Activated naive CD4-positive, alpha-beta T cell treated with anti-CD3 and anti-CD28 coated beads for 36 hours (primary cell): ENCODE measurements at regions of chr14 and their contacts with region 1.

Region 1: GRCh38 chr14:105490572-105491366 is at the start of gene TEDC1:
- DNase-seq: peak; percentile 100
- H3K4me3 Mint-ChIP-seq: peak within 1 kb of the TSS; percentile 83
- H3K27ac Mint-ChIP-seq: peak within 1 kb of the TSS; percentile 85
- H3K4me1 Mint-ChIP-seq: peaks cover 31% of the 10 kb centered on the region
- H3K27me3 Mint-ChIP-seq: no peaks in the 10 kb centered on the region
- total RNA-seq, gene TEDC1: 27.8 to 28.6 TPM

Region 2: DNA sequence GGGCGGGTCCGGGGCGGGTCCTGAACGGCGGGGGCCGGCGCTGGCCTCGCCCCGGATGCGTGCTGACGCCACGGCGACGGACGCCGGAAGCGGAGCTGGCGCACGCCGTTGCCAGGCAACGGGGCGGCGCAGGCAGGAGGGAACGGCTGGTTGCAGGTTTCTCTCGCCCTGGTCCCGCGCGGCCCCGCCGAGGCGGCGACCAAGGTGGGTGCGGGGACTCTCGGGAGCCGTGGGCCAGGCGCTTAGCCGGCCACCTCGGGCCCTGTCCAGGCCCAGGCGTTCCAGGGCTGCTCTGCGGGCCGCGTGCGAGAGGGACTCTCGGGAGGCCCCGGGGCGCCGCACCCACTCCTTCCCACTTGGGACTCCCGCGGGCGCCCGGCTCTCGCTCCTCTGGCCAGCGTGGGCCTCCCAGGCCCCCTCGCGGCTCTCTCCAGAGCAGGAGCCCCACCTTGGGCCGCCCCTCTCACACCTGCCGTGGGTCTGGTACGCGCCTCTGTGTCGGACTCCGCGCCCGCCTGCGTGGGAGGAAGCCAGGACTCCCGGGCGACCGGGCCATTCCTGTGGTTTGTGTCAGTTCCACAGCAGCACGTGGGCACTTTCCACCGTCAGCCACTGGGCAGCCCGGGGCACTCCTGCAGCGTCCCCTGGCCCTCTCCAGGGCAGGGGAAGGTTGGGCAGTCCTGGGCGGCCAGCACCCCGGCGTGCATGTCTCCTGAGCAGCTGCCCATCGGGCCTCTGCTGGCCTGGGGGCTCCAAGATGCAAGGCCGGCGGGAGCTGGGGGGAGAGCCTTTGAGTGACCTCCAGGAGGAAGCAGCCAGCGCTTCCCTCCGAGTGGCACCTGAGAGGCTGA is 504.9 kb before region 1 on chr14 and contains the start of gene CLBA1:
- CTCF ChIA-PET with region 1: no interaction called
- intact Hi-C with region 1: loop called (anchors 10 kb)
- DNase-seq: peak; percentile 81
- H3K4me3 Mint-ChIP-seq: peak within 1 kb of the TSS; percentile 65
- H3K27ac Mint-ChIP-seq: peak within 1 kb of the TSS; percentile 44
- H3K4me1 Mint-ChIP-seq: peaks cover 5% of the 10 kb centered on the region
- H3K27me3 Mint-ChIP-seq: no peaks in the 10 kb centered on the region
- total RNA-seq, gene CLBA1: 0.40 to 0.43 TPM

Region 3: DNA sequence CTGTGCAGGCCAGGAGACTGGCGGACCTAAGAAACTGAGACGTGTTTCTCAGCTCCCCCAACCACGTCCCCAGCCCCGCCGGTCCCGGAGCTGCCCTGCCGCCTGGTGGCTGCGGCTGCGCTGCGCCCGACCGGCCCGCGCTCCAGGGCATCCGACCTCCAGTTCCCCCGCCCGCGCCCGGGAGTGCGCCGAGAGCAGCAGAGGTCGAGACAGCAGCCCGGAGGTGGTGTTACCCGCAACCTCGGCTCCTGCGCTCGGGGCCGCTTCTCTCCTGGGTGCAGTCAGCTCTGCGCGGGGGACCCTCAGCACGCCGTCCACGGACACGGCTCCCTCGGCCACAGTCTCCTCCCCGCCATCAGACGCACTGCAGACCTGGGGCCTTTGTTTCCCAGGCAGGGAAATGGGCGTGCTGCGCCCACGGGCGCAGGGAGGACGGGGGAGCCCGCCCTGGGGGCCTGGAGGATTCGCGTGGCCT is 403.9 kb before region 1 on chr14:
- CTCF ChIA-PET with region 1: no interaction called
- intact Hi-C with region 1: loop called (anchors 2 kb)
- DNase-seq: peak; percentile 93
- H3K4me3 Mint-ChIP-seq: peak overlapping the region; percentile 76
- H3K27ac Mint-ChIP-seq: peak overlapping the region; percentile 63
- H3K4me1 Mint-ChIP-seq: peaks cover 8% of the 10 kb centered on the region
- H3K27me3 Mint-ChIP-seq: no peaks in the 10 kb centered on the region

Region 4: GRCh38 chr14:105258846-105259245 is 231.9 kb before region 1 on chr14:
- CTCF ChIA-PET with region 1: no interaction called
- intact Hi-C with region 1: no loop called
- DNase-seq: no peak
- H3K4me3 Mint-ChIP-seq: no peak overlapping the region
- H3K27ac Mint-ChIP-seq: no peak overlapping the region
- H3K4me1 Mint-ChIP-seq: peaks cover 8% of the 10 kb centered on the region
- H3K27me3 Mint-ChIP-seq: no peaks in the 10 kb centered on the region

Region 5: GRCh38 chr14:105300792-105301533 is 189.8 kb before region 1 on chr14 and contains the start of gene BRF1:
- CTCF ChIA-PET with region 1: interaction called, 5 read pairs
- intact Hi-C with region 1: loop called (anchors 1 kb)
- DNase-seq: peak; percentile 99
- H3K4me3 Mint-ChIP-seq: peak within 1 kb of the TSS; percentile 87
- H3K27ac Mint-ChIP-seq: peak within 1 kb of the TSS; percentile 88
- H3K4me1 Mint-ChIP-seq: peaks cover 35% of the 10 kb centered on the region
- H3K27me3 Mint-ChIP-seq: no peaks in the 10 kb centered on the region
- total RNA-seq, gene BRF1: 20.6 to 23.4 TPM

Region 6: GRCh38 chr14:105414456-105415371 is 76.1 kb before region 1 on chr14:
- CTCF ChIA-PET with region 1: interaction called, 5 read pairs
- intact Hi-C with region 1: loop called (anchors 2 kb)
- DNase-seq: peak; percentile 65
- H3K4me3 Mint-ChIP-seq: peak overlapping the region; percentile 64
- H3K27ac Mint-ChIP-seq: no peak overlapping the region
- H3K4me1 Mint-ChIP-seq: peaks cover 9% of the 10 kb centered on the region
- H3K27me3 Mint-ChIP-seq: peaks cover 12% of the 10 kb centered on the region

Region 7: GRCh38 chr14:105527661-105528581 is 37.2 kb after region 1 on chr14:
- CTCF ChIA-PET with region 1: interaction called, 3 read pairs
- intact Hi-C with region 1: loop called (anchors 1 kb)
- DNase-seq: peak; percentile 85
- H3K4me3 Mint-ChIP-seq: peak overlapping the region; percentile 79
- H3K27ac Mint-ChIP-seq: no peak overlapping the region
- H3K4me1 Mint-ChIP-seq: peaks cover 21% of the 10 kb centered on the region
- H3K27me3 Mint-ChIP-seq: peaks cover 9% of the 10 kb centered on the region

Region 8: GRCh38 chr14:105617201-105617777 is 126.5 kb after region 1 on chr14:
- CTCF ChIA-PET with region 1: no interaction called
- intact Hi-C with region 1: no loop called
- DNase-seq: peak; percentile 21
- H3K4me3 Mint-ChIP-seq: no peak overlapping the region
- H3K27ac Mint-ChIP-seq: no peak overlapping the region
- H3K4me1 Mint-ChIP-seq: no peaks in the 10 kb centered on the region
- H3K27me3 Mint-ChIP-seq: no peaks in the 10 kb centered on the region

Region 9: GRCh38 chr14:105817971-105818711 is 327.4 kb after region 1 on chr14:
- CTCF ChIA-PET with region 1: no interaction called
- intact Hi-C with region 1: no loop called
- DNase-seq: no peak
- H3K4me3 Mint-ChIP-seq: no peak overlapping the region
- H3K27ac Mint-ChIP-seq: no peak overlapping the region
- H3K4me1 Mint-ChIP-seq: no peaks in the 10 kb centered on the region
- H3K27me3 Mint-ChIP-seq: peaks cover 40% of the 10 kb centered on the region